ENCODE measurements at regions of chr10 and their contacts with region 1.

Region 1: GRCh38 chr10:128047351-128047750 is 78.9 kb downstream of the MKI67 start:
- DNase-seq: peak; percentile 92
- ATAC-seq: peak; percentile 96
- H3K4me3 Mint-ChIP-seq: peak overlapping the region; percentile 83
- H3K27ac Mint-ChIP-seq: peak overlapping the region; percentile 94
- H3K4me1 Mint-ChIP-seq: peaks cover 51% of the 10 kb centered on the region
- H3K27me3 Mint-ChIP-seq: no peaks in the 10 kb centered on the region

Region 2: DNA sequence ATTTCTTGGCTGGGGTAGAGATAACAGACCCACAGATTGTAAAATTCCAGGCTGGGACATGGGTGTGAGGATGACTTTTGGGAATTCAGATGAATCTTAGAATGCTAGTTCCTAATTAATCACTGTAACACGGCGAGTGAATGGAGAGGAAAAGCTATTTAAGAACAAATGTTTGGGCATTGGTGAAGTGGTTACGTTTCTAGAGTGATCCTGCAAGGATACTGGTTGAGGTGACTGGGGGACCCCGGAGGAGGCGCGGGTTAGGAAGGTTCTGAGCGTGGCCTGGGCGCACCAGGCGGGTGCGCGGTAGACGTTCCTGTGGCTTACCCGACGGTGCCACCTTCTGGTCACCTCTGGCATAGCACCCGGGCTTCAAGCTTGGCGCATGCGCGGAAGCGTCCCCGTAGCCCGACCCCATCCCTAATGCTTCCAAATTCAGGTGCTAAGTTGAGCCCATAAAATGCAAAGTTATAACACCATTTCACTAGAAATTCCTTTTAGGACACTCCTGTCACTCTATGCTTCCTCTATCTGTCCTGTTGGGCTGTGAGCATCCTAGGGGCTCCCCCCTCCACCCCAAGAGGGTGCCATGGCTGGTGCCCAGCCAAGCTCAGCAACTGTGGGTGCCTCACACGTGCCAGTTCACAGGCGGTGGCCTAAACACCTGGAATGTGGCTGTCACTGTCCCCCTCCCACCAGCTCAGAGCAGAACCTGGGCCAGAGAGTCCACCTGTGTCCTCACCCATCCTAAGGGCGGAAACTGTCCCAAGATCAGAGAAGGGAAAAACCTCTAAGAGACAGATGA is 36.0 kb before region 1 on chr10:
- CTCF ChIA-PET with region 1: interaction called, 11 read pairs
- POLR2A ChIA-PET with region 1: interaction called, 3 read pairs
- intact Hi-C with region 1: no loop called
- DNase-seq: peak; percentile 92
- ATAC-seq: peak; percentile 89
- H3K4me3 Mint-ChIP-seq: peak overlapping the region; percentile 28
- H3K27ac Mint-ChIP-seq: no peak overlapping the region
- H3K4me1 Mint-ChIP-seq: peaks cover 7% of the 10 kb centered on the region
- H3K27me3 Mint-ChIP-seq: peaks cover 3% of the 10 kb centered on the region

Region 3: DNA sequence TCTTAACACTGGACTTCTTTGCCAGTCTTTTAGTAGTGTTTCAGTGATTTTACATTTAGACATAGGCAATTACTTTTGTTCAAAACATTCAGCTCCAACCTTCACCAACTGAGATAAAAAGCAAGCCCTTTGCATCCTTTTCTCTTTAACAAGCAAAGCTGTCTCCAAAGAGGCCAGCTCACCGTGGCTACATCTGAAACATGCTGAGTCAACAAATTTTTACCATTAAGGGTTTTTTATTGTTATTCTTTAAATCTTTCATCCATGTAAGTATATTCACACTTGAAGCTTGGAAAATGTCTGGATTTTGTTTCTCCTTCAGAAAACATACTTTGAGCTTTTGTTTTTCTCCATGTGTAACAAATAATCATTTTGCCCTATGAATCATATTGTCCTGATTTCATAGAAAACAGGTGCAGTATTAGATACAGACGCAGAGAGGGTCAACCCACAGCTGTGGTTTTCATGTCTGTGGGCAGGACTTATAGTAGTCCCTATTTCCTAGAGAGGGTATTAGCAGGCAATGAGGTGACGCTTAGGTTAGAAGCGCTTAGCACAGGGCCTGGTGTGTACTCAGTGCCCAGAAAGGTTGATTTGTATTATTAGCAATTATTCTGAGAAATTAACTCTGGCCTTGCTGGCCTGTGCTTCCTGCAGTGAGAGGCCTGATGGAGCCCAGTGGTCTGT is 20.6 kb before region 1 on chr10:
- CTCF ChIA-PET with region 1: no interaction called
- POLR2A ChIA-PET with region 1: no interaction called
- intact Hi-C with region 1: no loop called
- DNase-seq: peak; percentile 65
- ATAC-seq: peak; percentile 85
- H3K4me3 Mint-ChIP-seq: no peak overlapping the region
- H3K27ac Mint-ChIP-seq: peak overlapping the region; percentile 47
- H3K4me1 Mint-ChIP-seq: peaks cover 20% of the 10 kb centered on the region
- H3K27me3 Mint-ChIP-seq: no peaks in the 10 kb centered on the region

Region 4: GRCh38 chr10:128064108-128064969 is 17.0 kb after region 1 on chr10:
- CTCF ChIA-PET with region 1: interaction called, 47 read pairs
- POLR2A ChIA-PET with region 1: interaction called, 60 read pairs
- intact Hi-C with region 1: loop called (anchors 1 kb)
- DNase-seq: peak; percentile 88
- ATAC-seq: peak; percentile 82
- H3K4me3 Mint-ChIP-seq: peak overlapping the region; percentile 59
- H3K27ac Mint-ChIP-seq: peak overlapping the region; percentile 90
- H3K4me1 Mint-ChIP-seq: peaks cover 69% of the 10 kb centered on the region
- H3K27me3 Mint-ChIP-seq: no peaks in the 10 kb centered on the region

Region 5: DNA sequence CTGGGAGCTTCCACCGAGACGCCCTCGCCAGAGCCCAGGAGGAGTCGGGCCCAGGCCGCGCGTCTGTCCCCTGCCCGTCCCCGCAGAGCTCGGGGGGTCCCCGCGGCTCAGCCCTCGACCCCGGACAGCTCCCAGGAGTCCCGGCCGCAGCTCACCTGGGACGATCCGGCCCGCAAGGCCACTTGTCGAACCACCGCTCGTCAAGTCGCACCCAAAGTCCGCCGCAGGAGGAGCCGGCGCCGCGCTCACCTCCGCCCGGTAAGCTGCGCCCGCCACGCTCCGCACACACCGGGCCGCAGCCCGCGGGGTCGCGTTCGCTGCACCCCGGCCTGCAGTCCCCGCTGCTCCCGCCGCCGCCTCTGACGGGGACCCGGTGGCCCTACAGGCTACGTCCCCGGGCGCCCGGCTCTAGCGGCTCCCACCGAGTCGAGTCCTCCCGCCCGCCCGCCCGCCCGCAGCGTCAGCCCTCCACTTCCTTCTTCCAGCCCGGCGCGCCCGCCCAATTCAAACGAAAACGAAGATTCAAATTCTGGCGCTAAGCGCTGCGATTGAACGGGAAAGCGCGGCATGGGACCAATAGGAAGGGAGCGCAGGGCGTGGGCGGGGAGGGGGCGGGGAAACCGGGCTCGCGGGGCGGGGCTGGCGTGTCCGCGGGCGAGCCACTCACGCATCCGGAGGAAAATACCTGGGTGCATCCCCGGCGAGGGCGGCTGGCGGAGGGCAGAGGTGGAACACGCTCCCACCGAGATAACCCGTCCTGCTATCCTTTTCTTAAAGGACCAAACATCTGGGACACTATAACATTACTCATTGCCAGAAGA is 78.8 kb after region 1 on chr10 and contains the start of gene MKI67:
- CTCF ChIA-PET with region 1: no interaction called
- POLR2A ChIA-PET with region 1: interaction called, 18 read pairs
- intact Hi-C with region 1: loop called in 1 of 2 experiments (anchors 1 kb)
- DNase-seq: peak; percentile 96
- ATAC-seq: peak; percentile 93
- H3K4me3 Mint-ChIP-seq: peak within 1 kb of the TSS; percentile 93
- H3K27ac Mint-ChIP-seq: peak within 1 kb of the TSS; percentile 90
- H3K4me1 Mint-ChIP-seq: peaks cover 27% of the 10 kb centered on the region
- H3K27me3 Mint-ChIP-seq: peaks cover 13% of the 10 kb centered on the region
- total RNA-seq, gene MKI67: 234 to 244 TPM

Region 6: GRCh38 chr10:129466703-129467358 is 1419.5 kb after region 1 on chr10 and contains the start of gene MGMT:
- CTCF ChIA-PET with region 1: interaction called, 3 read pairs
- POLR2A ChIA-PET with region 1: no interaction called
- intact Hi-C with region 1: loop called in 1 of 2 experiments (anchors 2 kb)
- DNase-seq: peak; percentile 99
- ATAC-seq: peak; percentile 98
- H3K4me3 Mint-ChIP-seq: peak within 1 kb of the TSS; percentile 77
- H3K27ac Mint-ChIP-seq: peak within 1 kb of the TSS; percentile 42
- H3K4me1 Mint-ChIP-seq: peaks cover 7% of the 10 kb centered on the region
- H3K27me3 Mint-ChIP-seq: no peaks in the 10 kb centered on the region
- total RNA-seq, gene MGMT: 18.0 to 22.8 TPM

Measured in activated CD4-positive, alpha-beta T cell treated with anti-CD3 and anti-CD28 coated beads for 36 hours (primary cell).